GM23248 (cell line): ENCODE measurements at regions of chrX and their contacts with region 1.

Region 1: GRCh38 chrX:57595381-57595811 is 3.6 kb downstream of the ZXDB start:
- DNase-seq: peak; percentile 78
- H3K4me3 ChIP-seq: peak overlapping the region; percentile 56
- H3K27ac ChIP-seq: peak overlapping the region; percentile 48
- H3K4me1 ChIP-seq: peaks cover 33% of the 10 kb centered on the region
- H3K27me3 ChIP-seq: no peaks in the 10 kb centered on the region

Region 2: GRCh38 chrX:57918750-57919436 is 323.5 kb after region 1 on chrX:
- in situ Hi-C with region 1: loop called (anchors 25 kb)
- DNase-seq: peak; percentile 55
- H3K4me3 ChIP-seq: no peak overlapping the region
- H3K27ac ChIP-seq: no peak overlapping the region
- H3K4me1 ChIP-seq: no peaks in the 10 kb centered on the region
- H3K27me3 ChIP-seq: no peaks in the 10 kb centered on the region